PC-3 (cell line): ENCODE measurements at regions of chr3 and their contacts with region 1.

Region 1: DNA sequence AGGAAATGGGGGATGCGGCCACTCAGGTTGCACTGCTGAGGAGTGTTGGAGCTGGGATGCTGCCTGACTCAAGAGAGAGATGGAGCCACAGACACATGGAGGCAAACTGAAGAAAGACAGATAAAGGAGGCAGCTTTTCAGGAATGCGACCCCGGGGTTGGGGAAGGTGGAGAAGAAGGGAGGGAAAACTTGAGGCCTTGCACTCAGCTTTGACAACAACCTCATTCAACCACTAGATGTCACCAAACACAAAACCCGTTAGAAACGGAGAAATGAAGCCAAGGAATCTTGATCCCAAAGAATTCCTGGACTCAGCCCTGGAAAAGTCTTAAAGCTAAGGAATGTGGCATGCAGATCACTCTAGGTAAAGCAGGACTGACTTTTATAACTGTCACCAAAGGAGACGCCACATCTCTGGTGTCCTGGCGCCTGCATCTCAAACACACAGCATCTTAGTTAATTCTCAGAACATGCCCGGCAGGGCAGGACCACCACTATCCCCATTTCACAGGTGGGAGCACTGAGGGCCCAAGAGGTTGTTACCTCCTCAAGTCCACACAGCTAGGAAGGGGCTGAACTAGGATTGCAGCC is 59.6 kb upstream of the LMCD1 start:
- DNase-seq: peak; percentile 84
- ATAC-seq: peak; percentile 1; the same call in 1 of the 2 replicates
- H3K4me3 ChIP-seq: no peak overlapping the region
- H3K27ac ChIP-seq: no peak overlapping the region
- H3K4me1 ChIP-seq: peaks cover 46% of the 10 kb centered on the region
- H3K27me3 ChIP-seq: no peaks in the 10 kb centered on the region
- CTCF ChIP-seq: peak; percentile 90

Region 2: GRCh38 chr3:8501371-8502131 is 59.5 kb after region 1 on chr3 and contains the start of gene LMCD1:
- CTCF ChIA-PET with region 1: interaction called, 16 read pairs
- POLR2A ChIA-PET with region 1: interaction called, 13 read pairs
- intact Hi-C with region 1: loop called (anchors 1 kb)
- DNase-seq: peak; percentile 97
- ATAC-seq: peak; percentile 86
- H3K4me3 ChIP-seq: peak within 1 kb of the TSS; percentile 65
- H3K27ac ChIP-seq: peak within 1 kb of the TSS; percentile 83
- H3K4me1 ChIP-seq: peaks cover 89% of the 10 kb centered on the region
- H3K27me3 ChIP-seq: no peaks in the 10 kb centered on the region
- CTCF ChIP-seq: no peak
- total RNA-seq, gene LMCD1: 8.2 and 9.1 TPM in 2 replicates

Region 3: GRCh38 chr3:8529738-8530525 is 87.9 kb after region 1 on chr3:
- CTCF ChIA-PET with region 1: no interaction called
- POLR2A ChIA-PET with region 1: no interaction called
- intact Hi-C with region 1: loop called (anchors 1 kb)
- DNase-seq: peak; percentile 77
- ATAC-seq: peak; percentile 88
- H3K4me3 ChIP-seq: peak overlapping the region; percentile 17; the same call in 1 of the 2 replicates
- H3K27ac ChIP-seq: peak overlapping the region; percentile 48
- H3K4me1 ChIP-seq: peaks cover 49% of the 10 kb centered on the region
- H3K27me3 ChIP-seq: no peaks in the 10 kb centered on the region
- CTCF ChIP-seq: no peak

Region 4: GRCh38 chr3:8622873-8623691 is 181.0 kb after region 1 on chr3:
- CTCF ChIA-PET with region 1: interaction called, 5 read pairs
- POLR2A ChIA-PET with region 1: no interaction called
- intact Hi-C with region 1: loop called (anchors 1 kb)
- DNase-seq: peak; percentile 76
- ATAC-seq: peak; percentile 89
- H3K4me3 ChIP-seq: no peak overlapping the region
- H3K27ac ChIP-seq: no peak overlapping the region
- H3K4me1 ChIP-seq: peaks cover 30% of the 10 kb centered on the region
- H3K27me3 ChIP-seq: no peaks in the 10 kb centered on the region
- CTCF ChIP-seq: peak; percentile 98